Ascending aorta (tissue), 2 donors: ENCODE measurements at regions of chr9 and their contacts with region 1.

Region 1: GRCh38 chr9:122125158-122125508 is 32.0 kb upstream of the TTLL11 start:
- DNase-seq: peak in 1 of 2 donors; percentile 82
- H3K4me3 ChIP-seq: no peak overlapping the region
- H3K27ac ChIP-seq: no peak overlapping the region
- H3K4me1 ChIP-seq: peaks cover 7 to 12% of the 10 kb centered on the region in 2 donors
- H3K27me3 ChIP-seq: no peaks in the 10 kb centered on the region
- CTCF ChIP-seq: peak; percentile 87 to 95 (median 92)

Region 2: GRCh38 chr9:122099271-122099869 is 25.8 kb before region 1 on chr9:
- intact Hi-C with region 1: loop called (anchors 1 kb)
- DNase-seq: peak; percentile 15 to 90
- H3K4me3 ChIP-seq: peak overlapping the region in 1 of 2 donors; percentile 25
- H3K27ac ChIP-seq: no peak overlapping the region
- H3K4me1 ChIP-seq: no peaks in the 10 kb centered on the region
- H3K27me3 ChIP-seq: no peaks in the 10 kb centered on the region
- CTCF ChIP-seq: peak; percentile 77 to 88 (median 82)

Region 3: DNA sequence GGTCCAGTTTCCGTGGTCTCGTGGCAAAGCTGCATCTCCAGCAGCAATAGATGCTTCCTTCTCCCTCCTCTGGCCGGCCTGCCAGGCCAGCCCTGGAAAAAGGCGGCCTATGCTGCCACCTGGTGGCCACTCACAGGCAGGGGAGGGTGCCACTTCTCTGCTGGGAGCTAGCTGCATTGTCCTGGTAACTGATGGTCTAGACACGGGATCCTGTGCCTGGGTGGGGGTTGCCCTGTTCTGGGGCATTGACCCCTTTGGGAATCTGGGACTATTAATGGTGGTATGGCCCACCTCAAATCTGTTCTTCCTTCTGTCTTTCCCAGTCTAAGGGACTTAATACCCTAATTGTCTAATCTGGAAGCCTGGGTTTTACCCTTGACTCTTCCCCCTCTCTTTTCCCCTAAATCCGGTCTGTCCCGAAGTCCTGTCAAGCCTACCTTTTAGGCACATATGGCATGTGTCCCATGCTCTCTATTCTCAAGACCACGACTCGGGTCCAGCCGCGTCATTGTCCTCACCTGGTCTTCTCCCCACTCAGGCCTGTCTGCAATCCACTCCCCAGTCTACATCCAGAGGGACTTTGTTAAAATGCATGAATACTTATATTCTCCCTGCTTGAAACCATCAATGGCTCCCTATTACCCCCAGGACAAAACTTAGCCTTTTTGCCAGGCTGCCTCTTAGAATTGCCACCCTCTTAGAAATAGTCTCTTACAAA is 225.7 kb after region 1 on chr9:
- intact Hi-C with region 1: loop called (anchors 1 kb)
- DNase-seq: peak in 1 of 2 donors; percentile 89
- H3K4me3 ChIP-seq: no peak overlapping the region
- H3K27ac ChIP-seq: no peak overlapping the region
- H3K4me1 ChIP-seq: peaks cover 0 to 7% of the 10 kb centered on the region in 2 donors
- H3K27me3 ChIP-seq: no peaks in the 10 kb centered on the region
- CTCF ChIP-seq: peak; percentile 89 to 94 (median 94)

Region 4: GRCh38 chr9:122356627-122357026 is 231.5 kb after region 1 on chr9:
- intact Hi-C with region 1: loop called (anchors 2 kb)
- DNase-seq: no peak
- H3K4me3 ChIP-seq: no peak overlapping the region
- H3K27ac ChIP-seq: no peak overlapping the region
- H3K4me1 ChIP-seq: no peaks in the 10 kb centered on the region
- H3K27me3 ChIP-seq: no peaks in the 10 kb centered on the region
- CTCF ChIP-seq: no peak

Region 5: GRCh38 chr9:122453677-122454135 is 328.6 kb after region 1 on chr9:
- intact Hi-C with region 1: loop called (anchors 10 kb)
- DNase-seq: no peak
- H3K4me3 ChIP-seq: no peak overlapping the region
- H3K27ac ChIP-seq: no peak overlapping the region
- H3K4me1 ChIP-seq: no peaks in the 10 kb centered on the region
- H3K27me3 ChIP-seq: no peaks in the 10 kb centered on the region
- CTCF ChIP-seq: no peak

Region 6: GRCh38 chr9:122810306-122810946 is 685.3 kb after region 1 on chr9:
- intact Hi-C with region 1: loop called (anchors 10 kb)
- DNase-seq: peak in 1 of 2 donors; percentile 72
- H3K4me3 ChIP-seq: no peak overlapping the region
- H3K27ac ChIP-seq: no peak overlapping the region
- H3K4me1 ChIP-seq: no peaks in the 10 kb centered on the region
- H3K27me3 ChIP-seq: no peaks in the 10 kb centered on the region
- CTCF ChIP-seq: peak; percentile 63 to 80 (median 79)